PC-3 (cell line): ENCODE measurements at regions of chr3 and their contacts with region 1.

Region 1: GRCh38 chr3:45092132-45093031 is 53.8 kb downstream of the CDCP1 start:
- DNase-seq: peak; percentile 98
- ATAC-seq: peak; percentile 91
- H3K4me3 ChIP-seq: no peak overlapping the region
- H3K27ac ChIP-seq: peak overlapping the region; percentile 94
- H3K4me1 ChIP-seq: peaks cover 54% of the 10 kb centered on the region
- H3K27me3 ChIP-seq: no peaks in the 10 kb centered on the region
- CTCF ChIP-seq: peak; percentile 47; the same call in 1 of the 2 replicates

Region 2: DNA sequence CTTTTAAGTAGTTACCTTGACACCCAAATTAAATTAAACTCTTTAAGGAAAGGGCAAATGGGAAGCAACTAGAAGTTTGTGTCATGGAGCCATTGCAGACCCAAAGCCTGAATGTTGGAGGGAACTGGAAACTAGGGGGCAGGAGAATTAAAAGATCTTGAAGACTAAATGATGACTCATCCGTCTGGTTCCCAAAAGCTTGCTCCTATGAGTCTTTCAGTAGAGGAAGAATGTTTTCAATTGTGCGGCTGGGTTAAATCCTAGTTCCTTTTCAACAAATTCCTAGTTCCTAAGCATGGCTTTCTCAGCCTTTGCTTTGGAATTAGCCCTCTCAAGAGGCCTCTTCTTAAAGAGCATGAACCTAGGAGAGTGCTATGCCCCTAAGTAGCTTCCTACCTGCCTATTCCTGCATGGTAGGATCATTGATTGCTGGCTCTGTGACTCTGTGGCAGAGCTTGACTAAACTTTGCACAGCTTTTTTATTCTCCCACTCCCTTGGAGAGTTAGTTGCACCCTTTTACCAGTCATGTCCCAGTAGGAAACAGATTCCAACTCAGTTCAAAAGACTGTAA is 48.6 kb before region 1 on chr3:
- CTCF ChIA-PET with region 1: interaction called, 30 read pairs
- POLR2A ChIA-PET with region 1: interaction called, 7 read pairs
- intact Hi-C with region 1: loop called (anchors 1 kb)
- DNase-seq: peak; percentile 78
- ATAC-seq: peak; percentile 27; the same call in 1 of the 2 replicates
- H3K4me3 ChIP-seq: no peak overlapping the region
- H3K27ac ChIP-seq: peak overlapping the region; percentile 54
- H3K4me1 ChIP-seq: peaks cover 31% of the 10 kb centered on the region
- H3K27me3 ChIP-seq: no peaks in the 10 kb centered on the region
- CTCF ChIP-seq: peak; percentile 48

Region 3: GRCh38 chr3:45105855-45106671 is 13.7 kb after region 1 on chr3:
- CTCF ChIA-PET with region 1: interaction called, 3 read pairs
- POLR2A ChIA-PET with region 1: interaction called, 12 read pairs
- intact Hi-C with region 1: loop called (anchors 1 kb)
- DNase-seq: peak; percentile 92
- ATAC-seq: peak; percentile 92
- H3K4me3 ChIP-seq: no peak overlapping the region
- H3K27ac ChIP-seq: peak overlapping the region; percentile 93
- H3K4me1 ChIP-seq: peaks cover 26% of the 10 kb centered on the region
- H3K27me3 ChIP-seq: no peaks in the 10 kb centered on the region
- CTCF ChIP-seq: no peak

Region 4: DNA sequence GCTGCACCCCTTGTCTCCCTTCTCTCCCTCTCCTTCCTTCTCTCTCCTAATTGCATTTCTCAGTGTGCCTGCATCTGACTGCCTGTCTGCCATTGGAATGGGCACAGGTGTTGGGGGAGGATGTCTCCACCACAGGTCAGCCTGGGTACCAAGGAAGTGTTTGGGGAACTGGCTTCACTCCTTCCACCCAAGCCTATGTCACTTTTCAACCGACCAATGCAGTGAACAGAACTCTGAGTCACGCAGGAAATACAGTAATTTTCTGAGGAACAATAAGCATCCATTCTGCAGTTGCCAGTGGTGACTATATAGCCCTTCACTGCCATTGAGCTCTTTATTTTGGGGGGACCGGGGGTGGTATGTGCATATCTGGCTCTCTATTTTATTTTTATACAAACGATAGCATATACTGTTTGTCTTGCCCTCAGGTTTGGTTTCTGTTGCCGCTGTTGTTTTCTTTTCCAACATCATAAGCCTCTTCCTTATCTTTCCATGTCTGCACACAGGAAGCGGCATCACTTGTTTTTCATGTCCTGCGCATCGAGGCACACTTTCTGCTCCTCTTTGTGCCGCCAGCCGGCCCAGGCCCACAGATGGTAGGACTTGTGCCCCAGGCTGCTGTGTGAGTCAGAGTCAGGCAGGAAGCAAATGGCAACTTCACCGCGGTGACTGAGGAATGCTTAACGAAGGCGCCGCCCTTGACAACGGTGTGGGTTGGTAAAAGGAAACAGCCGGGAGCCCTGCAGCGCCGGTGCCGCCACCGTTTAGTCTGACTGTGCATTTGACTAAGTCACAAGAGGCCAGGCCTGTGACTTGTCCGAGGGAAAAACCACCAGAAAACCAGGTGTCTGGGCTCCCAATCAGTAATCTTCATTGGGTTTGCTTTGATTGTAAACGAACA is 74.9 kb after region 1 on chr3:
- CTCF ChIA-PET with region 1: no interaction called
- POLR2A ChIA-PET with region 1: interaction called, 10 read pairs
- intact Hi-C with region 1: loop called (anchors 1 kb)
- DNase-seq: peak; percentile 99
- ATAC-seq: peak; percentile 93
- H3K4me3 ChIP-seq: peak overlapping the region; percentile 34; the same call in 1 of the 2 replicates
- H3K27ac ChIP-seq: peak overlapping the region; percentile 96
- H3K4me1 ChIP-seq: peaks cover 44% of the 10 kb centered on the region
- H3K27me3 ChIP-seq: no peaks in the 10 kb centered on the region
- CTCF ChIP-seq: no peak

Region 5: GRCh38 chr3:45224824-45225464 is 132.6 kb after region 1 on chr3:
- CTCF ChIA-PET with region 1: interaction called, 6 read pairs
- POLR2A ChIA-PET with region 1: interaction called, 25 read pairs
- intact Hi-C with region 1: no loop called
- DNase-seq: peak; percentile 73
- ATAC-seq: peak; percentile 61
- H3K4me3 ChIP-seq: peak overlapping the region; percentile 76
- H3K27ac ChIP-seq: peak overlapping the region; percentile 64
- H3K4me1 ChIP-seq: peaks cover 15% of the 10 kb centered on the region
- H3K27me3 ChIP-seq: no peaks in the 10 kb centered on the region
- CTCF ChIP-seq: peak; percentile 58